CD4-positive, alpha-beta memory T cell (primary cell): ENCODE measurements at regions of chr21 and their contacts with region 1.

Region 1: GRCh38 chr21:32569261-32570230 is 15.8 kb downstream of the TCP10L start:
- DNase-seq: peak; percentile 82 to 86 (median 85)
- H3K4me3 ChIP-seq: peak overlapping the region; percentile 76 to 96
- H3K4me3 Mint-ChIP-seq: peak overlapping the region; percentile 88 to 95 (median 94)
- H3K27ac ChIP-seq: peak overlapping the region; percentile 79
- H3K27ac Mint-ChIP-seq: peak overlapping the region; percentile 88 to 97 (median 93)
- H3K4me1 ChIP-seq: peaks cover 18% of the 10 kb centered on the region
- H3K4me1 Mint-ChIP-seq: peaks cover 5 to 26% (median 14%) of the 10 kb centered on the region in 4 donors
- H3K27me3 ChIP-seq: no peaks in the 10 kb centered on the region
- H3K27me3 Mint-ChIP-seq: peaks cover 0 to 1% of the 10 kb centered on the region in 2 donors

Region 2: GRCh38 chr21:32278518-32279376 is 290.8 kb before region 1 on chr21 and contains the start of gene MIS18A:
- CTCF ChIA-PET with region 1: no interaction called
- POLR2A ChIA-PET with region 1: interaction called, 3 read pairs
- intact Hi-C with region 1: loop called (anchors 2 kb)
- DNase-seq: peak; percentile 94 to 97 (median 95)
- H3K4me3 ChIP-seq: peak within 1 kb of the TSS; percentile 73 to 84
- H3K4me3 Mint-ChIP-seq: peak within 1 kb of the TSS; percentile 96 to 100 (median 99)
- H3K27ac ChIP-seq: peak within 1 kb of the TSS; percentile 67
- H3K27ac Mint-ChIP-seq: peak within 1 kb of the TSS; percentile 93 to 98 (median 96)
- H3K4me1 ChIP-seq: peaks cover 23% of the 10 kb centered on the region
- H3K4me1 Mint-ChIP-seq: peaks cover 17 to 36% (median 27%) of the 10 kb centered on the region in 4 donors
- H3K27me3 ChIP-seq: no peaks in the 10 kb centered on the region
- H3K27me3 Mint-ChIP-seq: no peaks in the 10 kb centered on the region
- total RNA-seq, gene MIS18A: 6.7 to 9.5 TPM

Region 3: DNA sequence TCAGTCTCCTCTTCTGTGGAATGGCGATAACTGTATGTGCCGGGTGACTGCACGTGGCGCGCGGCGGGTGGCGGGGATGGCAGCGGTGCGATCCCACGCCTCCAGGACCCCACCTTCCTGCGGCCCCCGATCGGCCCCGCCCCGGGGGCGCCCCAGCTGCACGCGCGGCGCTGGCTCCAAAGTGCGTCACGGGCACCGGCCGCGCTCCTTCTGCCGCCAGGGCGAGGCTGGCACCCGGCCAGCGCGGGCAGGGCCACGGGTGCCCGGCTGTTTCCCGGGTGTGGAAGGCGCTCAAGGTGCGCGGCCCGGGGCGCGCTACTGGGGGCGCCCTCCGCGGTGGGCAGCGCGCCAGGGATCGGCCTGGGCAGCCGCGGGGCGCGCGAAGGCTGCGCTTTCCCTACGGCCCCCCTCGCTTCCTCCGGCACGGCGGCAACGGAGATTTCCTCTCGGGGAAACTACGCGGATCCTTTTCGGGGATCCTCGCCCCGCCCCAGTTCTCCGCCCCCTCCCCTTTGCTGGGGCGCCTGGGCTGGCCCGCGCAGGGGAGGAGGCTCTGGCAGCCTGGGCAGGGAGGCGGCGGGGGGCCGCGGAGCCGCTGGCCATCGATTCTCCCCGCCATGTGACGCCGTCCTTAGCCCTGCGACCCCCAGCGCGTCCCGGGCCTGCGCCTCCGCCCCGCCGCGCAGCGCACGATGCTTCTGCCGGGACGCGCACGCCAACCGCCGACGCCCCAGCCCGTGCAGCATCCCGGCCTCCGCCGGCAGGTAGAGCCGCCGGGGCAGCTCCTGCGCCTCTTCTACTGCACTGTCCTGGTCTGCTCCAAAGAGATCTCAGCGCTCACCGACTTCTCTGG is 157.2 kb before region 1 on chr21 and contains the start of gene EVA1C:
- CTCF ChIA-PET with region 1: interaction called, 9 read pairs
- POLR2A ChIA-PET with region 1: interaction called, 92 read pairs
- intact Hi-C with region 1: loop called (anchors 1 kb)
- DNase-seq: peak; percentile 81 to 87 (median 85)
- H3K4me3 ChIP-seq: peak within 1 kb of the TSS; percentile 40 to 83
- H3K4me3 Mint-ChIP-seq: peak within 1 kb of the TSS; percentile 94 to 98 (median 96)
- H3K27ac ChIP-seq: peak within 1 kb of the TSS; percentile 86
- H3K27ac Mint-ChIP-seq: peak within 1 kb of the TSS; percentile 95 to 99 (median 97)
- H3K4me1 ChIP-seq: peaks cover 34% of the 10 kb centered on the region
- H3K4me1 Mint-ChIP-seq: peaks cover 32 to 71% (median 43%) of the 10 kb centered on the region in 4 donors
- H3K27me3 ChIP-seq: no peaks in the 10 kb centered on the region
- H3K27me3 Mint-ChIP-seq: no peaks in the 10 kb centered on the region
- total RNA-seq, gene EVA1C: 17.1 to 17.2 TPM

Region 4: DNA sequence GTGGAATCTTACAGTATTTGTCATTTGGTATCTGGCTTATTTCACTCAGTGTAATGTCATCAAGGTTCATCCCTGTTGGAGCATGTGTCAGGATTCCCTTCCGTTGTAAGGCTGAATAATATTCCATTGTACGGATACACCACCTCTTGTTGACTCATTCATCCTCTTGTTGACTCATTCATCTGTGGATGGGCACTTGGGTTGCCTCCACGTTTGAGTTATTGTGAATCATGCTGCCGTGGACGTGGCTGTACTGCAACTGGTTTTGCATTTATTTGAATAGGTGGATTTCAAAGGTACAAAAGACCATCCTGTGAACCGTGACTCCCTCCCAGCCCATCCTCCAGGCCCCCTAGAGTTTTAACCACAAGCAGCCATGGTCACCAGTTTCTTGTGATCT is 27.7 kb after region 1 on chr21:
- CTCF ChIA-PET with region 1: interaction called, 21 read pairs
- POLR2A ChIA-PET with region 1: no interaction called
- intact Hi-C with region 1: loop called (anchors 1 kb)
- DNase-seq: no peak
- H3K4me3 ChIP-seq: no peak overlapping the region
- H3K4me3 Mint-ChIP-seq: no peak overlapping the region
- H3K27ac ChIP-seq: no peak overlapping the region
- H3K27ac Mint-ChIP-seq: peak overlapping the region in 1 of 7 donors; percentile 15
- H3K4me1 ChIP-seq: no peaks in the 10 kb centered on the region
- H3K4me1 Mint-ChIP-seq: peaks cover 0 to 3% (median 0%) of the 10 kb centered on the region in 4 donors
- H3K27me3 ChIP-seq: no peaks in the 10 kb centered on the region
- H3K27me3 Mint-ChIP-seq: no peaks in the 10 kb centered on the region

Region 5: GRCh38 chr21:32612075-32612998 is 42.8 kb after region 1 on chr21 and contains the start of gene CFAP298:
- CTCF ChIA-PET with region 1: interaction called, 6 read pairs
- POLR2A ChIA-PET with region 1: interaction called, 21 read pairs
- intact Hi-C with region 1: loop called (anchors 2 kb)
- DNase-seq: peak; percentile 90 to 97 (median 92)
- H3K4me3 ChIP-seq: peak within 1 kb of the TSS; percentile 95 to 99
- H3K4me3 Mint-ChIP-seq: peak within 1 kb of the TSS; percentile 91 to 98 (median 96)
- H3K27ac ChIP-seq: peak within 1 kb of the TSS; percentile 86
- H3K27ac Mint-ChIP-seq: peak within 1 kb of the TSS; percentile 98 to 99 (median 99)
- H3K4me1 ChIP-seq: peaks cover 12% of the 10 kb centered on the region
- H3K4me1 Mint-ChIP-seq: peaks cover 8 to 32% (median 20%) of the 10 kb centered on the region in 4 donors
- H3K27me3 ChIP-seq: no peaks in the 10 kb centered on the region
- H3K27me3 Mint-ChIP-seq: peaks cover 1 to 2% of the 10 kb centered on the region in 2 donors
- total RNA-seq, gene CFAP298: 29.4 to 39.1 TPM

Region 6: DNA sequence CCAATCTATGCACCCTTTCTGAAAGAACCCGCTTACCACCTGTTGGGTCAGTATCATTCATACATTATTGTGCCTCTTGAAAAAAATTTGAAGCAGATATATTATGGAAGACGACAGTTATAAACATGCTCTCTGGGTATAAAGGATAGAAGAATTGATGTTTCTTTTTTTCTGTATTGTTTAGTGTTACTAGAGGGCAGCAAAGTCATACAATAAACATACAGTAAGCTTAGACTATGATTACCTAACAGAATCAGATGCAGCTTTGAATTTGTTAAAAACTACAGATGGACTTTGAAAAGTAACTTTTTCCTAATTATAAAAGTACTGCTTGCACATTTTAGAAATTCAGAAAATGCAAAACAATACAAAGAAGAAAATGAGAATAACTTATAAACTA is 213.2 kb after region 1 on chr21:
- CTCF ChIA-PET with region 1: no interaction called
- POLR2A ChIA-PET with region 1: no interaction called
- intact Hi-C with region 1: no loop called
- DNase-seq: no peak
- H3K4me3 ChIP-seq: no peak overlapping the region
- H3K4me3 Mint-ChIP-seq: no peak overlapping the region
- H3K27ac ChIP-seq: no peak overlapping the region
- H3K27ac Mint-ChIP-seq: no peak overlapping the region
- H3K4me1 ChIP-seq: no peaks in the 10 kb centered on the region
- H3K4me1 Mint-ChIP-seq: peaks cover 0 to 3% (median under 1%) of the 10 kb centered on the region in 4 donors
- H3K27me3 ChIP-seq: no peaks in the 10 kb centered on the region
- H3K27me3 Mint-ChIP-seq: no peaks in the 10 kb centered on the region